ENCODE measurements at regions of chr1 and their contacts with region 1.

Region 1: DNA sequence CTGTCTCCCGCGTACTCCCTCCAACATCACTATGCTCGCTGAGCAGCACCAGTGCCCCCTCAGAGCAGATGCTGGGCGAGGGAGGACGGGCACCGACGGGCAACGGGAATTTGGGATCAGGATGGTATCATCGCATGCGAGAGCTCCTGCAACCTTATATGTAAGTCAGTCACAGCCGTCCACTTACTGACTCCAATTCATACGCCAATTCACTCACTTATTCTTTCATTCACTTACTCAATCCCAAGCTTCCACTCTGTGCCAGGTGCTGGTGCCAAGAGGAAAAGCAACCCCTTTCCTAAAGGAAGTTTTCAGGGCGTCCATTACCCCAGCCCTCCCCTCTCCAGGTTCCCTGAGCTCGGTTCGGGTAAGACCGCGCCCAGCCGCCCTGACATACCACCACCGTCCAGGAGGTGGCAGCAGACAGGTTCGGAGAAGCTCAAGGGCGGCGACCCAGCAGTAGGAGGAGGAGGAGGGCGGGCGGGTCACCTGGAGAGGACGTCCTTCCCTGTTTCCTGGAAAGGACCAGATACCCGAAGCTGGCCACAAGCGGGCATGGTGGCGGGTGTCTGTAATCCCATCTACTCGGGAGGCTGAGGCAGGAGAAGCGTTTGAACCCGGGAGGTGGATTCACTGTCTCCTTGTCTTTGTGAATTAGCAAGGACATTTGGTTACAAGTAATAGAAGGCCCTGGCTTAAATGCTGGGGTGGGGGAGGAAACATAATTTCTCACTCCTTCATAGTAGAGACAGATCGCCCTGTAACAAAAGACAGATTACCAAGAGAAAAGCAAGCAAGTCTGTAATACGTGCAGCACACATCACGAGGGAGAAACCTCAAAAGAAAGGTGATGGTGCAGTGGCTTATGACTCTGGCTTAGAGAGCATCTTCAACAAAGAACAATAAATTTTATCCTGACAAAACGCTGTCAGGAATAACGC is 7.6 kb upstream of the IL22RA1 start:
- DNase-seq: peak; percentile 90
- H3K4me3 Mint-ChIP-seq: peak overlapping the region; percentile 58
- H3K27ac Mint-ChIP-seq: peak overlapping the region; percentile 3
- H3K4me1 Mint-ChIP-seq: peaks cover 20% of the 10 kb centered on the region
- H3K27me3 Mint-ChIP-seq: no peaks in the 10 kb centered on the region
- CTCF ChIP-seq: peak; percentile 81

Region 2: DNA sequence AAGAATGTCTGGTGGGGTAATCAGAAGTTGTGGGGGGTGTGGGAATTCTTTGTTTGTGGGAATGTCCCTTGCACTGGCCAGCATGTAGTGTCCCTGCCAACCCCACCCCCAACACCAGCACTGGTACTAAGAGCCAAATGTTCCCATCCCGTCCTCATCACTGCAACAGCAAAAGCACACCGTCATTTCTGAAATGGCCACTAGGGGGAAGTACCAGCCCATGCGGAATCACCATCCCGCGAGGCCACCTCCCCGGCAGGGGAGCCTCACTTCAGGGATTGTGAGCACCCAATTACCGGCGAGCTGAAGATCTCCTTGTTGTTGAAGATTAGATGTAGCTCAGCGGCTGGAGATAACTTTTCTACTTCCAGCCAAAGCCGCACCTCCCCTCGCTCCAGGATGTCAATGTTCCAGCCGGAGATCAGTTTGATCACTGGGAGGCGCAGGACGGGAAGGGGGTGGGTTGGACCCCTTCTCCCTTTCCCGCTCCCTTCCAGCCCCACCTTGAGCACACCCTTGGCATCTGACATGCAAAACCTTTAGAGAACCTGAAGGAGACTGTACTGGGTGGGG is 79.6 kb before region 1 on chr1:
- CTCF ChIA-PET with region 1: interaction called, 12 read pairs
- POLR2A ChIA-PET with region 1: no interaction called
- intact Hi-C with region 1: loop called (anchors 1 kb)
- DNase-seq: peak; percentile 84
- H3K4me3 Mint-ChIP-seq: no peak overlapping the region
- H3K27ac Mint-ChIP-seq: no peak overlapping the region
- H3K4me1 Mint-ChIP-seq: peaks cover 3% of the 10 kb centered on the region
- H3K27me3 Mint-ChIP-seq: no peaks in the 10 kb centered on the region
- CTCF ChIP-seq: peak; percentile 88

Region 3: DNA sequence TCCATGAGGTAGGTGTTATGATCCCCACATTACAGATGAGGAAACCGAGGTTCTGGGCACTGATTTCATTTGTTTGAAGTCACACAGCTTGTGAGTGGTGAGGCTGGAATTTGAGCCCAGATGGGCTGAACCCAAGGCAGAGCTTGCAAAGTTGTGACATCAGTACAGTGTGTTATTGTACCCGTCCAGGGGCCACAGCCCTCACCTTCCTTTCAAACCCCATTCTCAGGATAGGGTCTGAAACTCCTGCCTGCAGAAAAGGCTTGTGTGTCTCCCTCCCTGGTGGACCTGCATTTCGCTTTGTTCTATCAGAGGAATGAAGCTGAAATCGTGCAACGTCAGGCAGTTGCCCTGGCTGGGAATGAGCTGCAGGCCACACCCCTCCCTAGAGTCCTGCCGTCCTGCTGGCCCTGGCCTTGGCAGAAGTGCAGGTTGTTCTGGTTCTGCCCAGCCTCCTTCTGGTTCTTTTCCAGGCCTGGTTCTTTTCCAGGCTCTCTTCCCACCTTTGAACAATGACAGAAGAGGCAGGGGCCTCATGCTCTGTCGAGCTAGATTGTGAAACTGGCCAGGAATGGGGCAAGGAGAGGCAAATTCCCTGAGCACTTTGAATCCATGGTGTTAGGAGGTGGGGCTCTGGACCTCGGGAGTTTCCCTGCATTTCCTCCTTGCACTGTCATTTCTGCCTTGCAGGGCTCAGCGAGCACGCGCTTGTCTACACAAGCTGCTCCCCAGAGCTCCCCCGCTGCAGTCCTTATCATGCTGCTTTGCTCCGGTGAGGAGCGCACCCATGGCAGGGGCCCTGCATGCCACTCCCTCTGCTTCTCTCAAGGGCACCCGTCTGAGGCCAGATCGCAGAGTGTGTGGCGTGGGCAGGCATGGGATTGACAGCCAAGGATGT is 30.4 kb before region 1 on chr1:
- CTCF ChIA-PET with region 1: interaction called, 8 read pairs
- POLR2A ChIA-PET with region 1: interaction called, 21 read pairs
- intact Hi-C with region 1: no loop called
- DNase-seq: peak; percentile 89
- H3K4me3 Mint-ChIP-seq: peak overlapping the region; percentile 56
- H3K27ac Mint-ChIP-seq: peak overlapping the region; percentile 82
- H3K4me1 Mint-ChIP-seq: peaks cover 27% of the 10 kb centered on the region
- H3K27me3 Mint-ChIP-seq: no peaks in the 10 kb centered on the region
- CTCF ChIP-seq: no peak

Region 4: GRCh38 chr1:24161270-24161669 is 10.8 kb after region 1 on chr1:
- CTCF ChIA-PET with region 1: interaction called, 18 read pairs
- POLR2A ChIA-PET with region 1: interaction called, 3 read pairs
- intact Hi-C with region 1: no loop called
- DNase-seq: no peak
- H3K4me3 Mint-ChIP-seq: no peak overlapping the region
- H3K27ac Mint-ChIP-seq: no peak overlapping the region
- H3K4me1 Mint-ChIP-seq: no peaks in the 10 kb centered on the region
- H3K27me3 Mint-ChIP-seq: peaks cover 8% of the 10 kb centered on the region
- CTCF ChIP-seq: no peak

Region 5: DNA sequence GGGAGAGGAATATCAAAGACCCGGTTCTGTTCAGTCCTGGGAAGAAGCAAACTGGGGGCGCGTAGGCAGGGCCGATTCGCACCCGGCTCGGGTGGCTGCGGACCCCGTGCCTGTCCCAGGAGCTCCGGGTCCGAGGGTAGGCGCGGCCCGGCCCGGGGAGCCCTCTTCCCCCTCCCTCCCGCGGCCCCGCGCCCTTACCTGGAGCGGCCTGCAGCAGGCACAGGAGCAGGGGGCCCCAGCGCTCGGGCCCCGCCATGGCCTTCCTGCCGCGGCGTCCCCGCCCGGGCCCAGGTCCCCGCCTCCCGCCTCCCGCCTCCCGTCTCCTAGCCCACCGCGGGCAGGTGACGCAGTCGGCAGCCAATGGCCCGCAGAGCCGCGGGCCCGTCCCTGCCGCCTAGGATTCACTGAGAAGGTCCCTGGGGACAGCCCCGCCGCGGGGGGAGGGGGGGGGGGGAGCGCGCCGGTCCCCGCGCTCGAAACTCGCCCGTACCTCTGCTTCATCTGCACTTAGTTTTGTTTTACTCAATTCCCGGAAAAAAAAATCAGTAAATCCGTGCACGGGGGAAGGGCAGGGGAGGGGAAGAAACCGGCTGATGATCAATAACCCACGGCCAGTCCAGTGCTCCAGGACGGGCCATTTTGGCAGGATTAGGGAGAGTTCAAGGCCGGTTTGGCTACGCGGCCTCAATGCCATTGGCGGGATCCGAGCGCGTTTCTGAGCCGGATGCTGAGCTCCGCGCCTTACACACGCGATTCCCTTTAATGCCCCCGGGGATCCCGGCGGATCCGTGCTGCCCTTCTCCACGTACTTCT is 36.7 kb after region 1 on chr1 and contains the start of gene IFNLR1:
- CTCF ChIA-PET with region 1: interaction called, 13 read pairs
- POLR2A ChIA-PET with region 1: interaction called, 8 read pairs
- intact Hi-C with region 1: no loop called
- DNase-seq: no peak
- H3K4me3 Mint-ChIP-seq: peak within 1 kb of the TSS; percentile 51
- H3K27ac Mint-ChIP-seq: no peak within 1 kb of the TSS
- H3K4me1 Mint-ChIP-seq: peaks cover 19% of the 10 kb centered on the region
- H3K27me3 Mint-ChIP-seq: no peaks in the 10 kb centered on the region
- CTCF ChIP-seq: no peak
- total RNA-seq, gene IFNLR1: 0.12 and 0.19 TPM in 2 replicates

Region 6: DNA sequence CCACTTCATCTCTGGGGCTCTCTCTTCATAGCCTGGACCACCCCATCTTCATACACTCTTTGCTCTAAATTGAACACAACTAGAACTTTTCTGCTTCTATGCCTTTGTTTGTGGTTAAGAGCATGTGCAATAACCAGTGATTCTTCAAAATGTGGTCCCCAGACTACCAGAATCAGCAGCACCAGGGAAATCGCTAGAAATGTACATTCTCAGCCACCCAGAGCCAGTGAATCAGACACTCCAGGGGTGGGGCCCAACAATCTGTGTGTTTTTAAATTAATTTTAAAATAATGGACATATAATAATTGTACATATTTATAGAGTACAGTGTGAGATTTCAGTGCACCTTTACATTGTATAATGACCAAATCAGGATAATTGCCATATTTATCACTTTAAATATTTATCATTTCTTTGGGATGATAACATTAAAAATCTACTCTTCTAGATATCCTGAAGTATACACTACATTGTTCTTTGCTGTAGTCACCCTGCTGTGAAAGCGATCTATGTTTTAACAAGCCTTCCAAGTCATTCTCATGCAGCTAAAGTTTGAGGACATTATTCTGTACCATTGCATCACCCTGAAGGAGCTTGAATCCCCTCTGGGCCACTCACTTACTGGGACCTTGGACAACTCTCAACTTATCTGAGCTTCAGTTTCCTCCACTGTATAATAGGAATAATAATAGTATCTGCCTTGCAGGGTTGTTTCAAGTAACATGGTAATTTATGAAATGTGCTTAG is 179.5 kb after region 1 on chr1:
- CTCF ChIA-PET with region 1: no interaction called
- POLR2A ChIA-PET with region 1: no interaction called
- intact Hi-C with region 1: no loop called
- DNase-seq: no peak
- H3K4me3 Mint-ChIP-seq: no peak overlapping the region
- H3K27ac Mint-ChIP-seq: no peak overlapping the region
- H3K4me1 Mint-ChIP-seq: peaks cover 13% of the 10 kb centered on the region
- H3K27me3 Mint-ChIP-seq: no peaks in the 10 kb centered on the region
- CTCF ChIP-seq: no peak

Region 7: DNA sequence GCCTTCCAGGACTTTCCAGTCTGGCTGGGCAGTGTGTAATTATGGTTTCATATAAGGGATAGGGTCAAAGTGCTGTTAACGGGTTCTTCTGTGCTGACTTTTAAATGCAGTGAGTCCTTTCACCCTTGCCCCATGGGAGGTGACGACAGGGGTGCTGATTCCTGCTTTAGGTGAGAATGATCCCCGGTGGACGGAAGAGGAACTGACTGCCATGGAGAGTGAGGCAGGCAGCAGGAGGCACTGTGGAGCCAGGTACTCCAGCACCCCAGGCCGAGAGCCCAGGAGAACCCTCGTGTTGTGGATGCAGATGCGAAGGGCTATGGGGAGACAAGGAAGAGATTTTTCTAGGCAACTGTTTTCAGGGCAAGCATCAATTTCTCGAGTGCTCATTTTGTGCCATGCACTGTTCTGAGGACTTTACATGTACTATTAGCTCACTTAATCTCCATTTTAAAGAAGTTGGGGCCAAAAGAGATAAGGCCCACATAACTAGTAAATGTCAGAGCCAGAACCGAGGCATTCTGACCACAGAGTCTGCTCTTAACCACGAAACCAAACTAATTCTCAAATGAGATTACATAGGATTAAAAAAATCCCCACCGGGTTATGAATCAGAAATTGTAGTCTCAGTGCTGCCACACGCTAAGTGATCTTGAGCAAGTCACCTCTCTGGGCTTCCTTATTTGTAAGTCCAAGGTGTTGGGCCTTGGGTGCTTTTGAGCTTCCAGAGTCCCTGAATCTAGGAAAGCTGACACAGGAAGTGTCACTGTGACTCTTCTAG is 234.8 kb after region 1 on chr1:
- CTCF ChIA-PET with region 1: interaction called, 47 read pairs
- POLR2A ChIA-PET with region 1: interaction called, 22 read pairs
- intact Hi-C with region 1: no loop called
- DNase-seq: peak; percentile 79
- H3K4me3 Mint-ChIP-seq: no peak overlapping the region
- H3K27ac Mint-ChIP-seq: peak overlapping the region; percentile 84
- H3K4me1 Mint-ChIP-seq: peaks cover 66% of the 10 kb centered on the region
- H3K27me3 Mint-ChIP-seq: no peaks in the 10 kb centered on the region
- CTCF ChIP-seq: peak; percentile 53

Measured in MCF 10A (cell line).